Caco-2 (cell line): ENCODE measurements at regions of chr17 and their contacts with region 1.

Region 1: DNA sequence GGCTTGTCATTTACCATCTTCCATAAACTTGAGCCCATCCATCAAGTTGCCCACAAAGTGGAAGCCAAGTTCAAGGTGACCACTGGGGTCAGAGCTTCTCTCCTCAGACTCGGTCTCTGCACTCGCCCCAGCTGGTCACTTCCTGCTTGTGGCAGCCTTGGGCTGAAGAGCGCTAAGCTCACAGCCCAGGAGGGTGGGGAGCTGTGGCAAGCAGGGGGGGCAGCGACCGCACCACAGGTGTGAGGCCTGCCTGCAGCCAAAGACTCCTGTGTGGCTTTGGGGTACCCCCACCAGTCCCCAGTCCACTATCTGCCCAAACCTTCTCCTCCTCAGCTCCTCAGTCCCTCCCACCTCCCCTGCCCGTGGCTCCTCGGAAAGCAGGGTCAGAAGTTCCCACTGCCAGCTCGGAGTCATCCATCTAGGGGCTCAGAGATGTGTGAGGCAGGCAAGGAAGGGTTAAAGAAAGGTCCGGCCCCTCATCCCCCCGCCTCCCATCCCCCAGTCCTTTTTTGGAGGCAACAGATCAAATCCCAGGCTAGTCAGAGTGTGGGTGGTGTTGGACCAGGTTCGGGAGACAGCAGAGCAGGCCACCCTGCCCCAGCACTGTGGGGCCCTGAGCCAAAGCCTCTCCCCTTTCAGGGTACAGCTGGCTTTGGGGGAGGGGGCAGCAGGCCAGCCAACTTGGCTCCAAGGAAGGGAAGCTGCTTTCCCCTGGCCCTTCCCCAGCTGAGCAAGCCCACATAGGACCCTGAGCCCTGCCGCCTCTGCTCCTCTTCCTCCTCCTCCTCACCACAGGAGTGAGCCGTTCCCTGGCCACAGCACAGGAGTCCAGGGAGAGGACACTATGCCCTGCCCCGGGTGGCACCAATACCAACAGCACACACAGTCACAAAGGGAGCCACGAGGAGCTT is 3.2 kb downstream of the CSF3 start:
- DNase-seq: no peak
- H3K4me3 ChIP-seq: no peak overlapping the region
- H3K4me3 Mint-ChIP-seq: no peak overlapping the region
- H3K27ac Mint-ChIP-seq: no peak overlapping the region
- H3K4me1 ChIP-seq: peaks cover 18% of the 10 kb centered on the region
- H3K4me1 Mint-ChIP-seq: no peaks in the 10 kb centered on the region
- H3K27me3 ChIP-seq: no peaks in the 10 kb centered on the region
- H3K27me3 Mint-ChIP-seq: no peaks in the 10 kb centered on the region
- CTCF ChIP-seq: no peak

Region 2: GRCh38 chr17:39777534-39778365 is 240.7 kb before region 1 on chr17:
- CTCF ChIA-PET with region 1: no interaction called
- POLR2A ChIA-PET with region 1: no interaction called
- intact Hi-C with region 1: no loop called
- DNase-seq: no peak
- H3K4me3 ChIP-seq: no peak overlapping the region
- H3K4me3 Mint-ChIP-seq: no peak overlapping the region
- H3K27ac Mint-ChIP-seq: no peak overlapping the region
- H3K4me1 ChIP-seq: peaks cover 18% of the 10 kb centered on the region
- H3K4me1 Mint-ChIP-seq: peaks cover 17% of the 10 kb centered on the region
- H3K27me3 ChIP-seq: no peaks in the 10 kb centered on the region
- H3K27me3 Mint-ChIP-seq: no peaks in the 10 kb centered on the region
- CTCF ChIP-seq: no peak

Region 3: GRCh38 chr17:40075201-40075941 is 56.9 kb after region 1 on chr17:
- CTCF ChIA-PET with region 1: interaction called, 3 read pairs
- POLR2A ChIA-PET with region 1: no interaction called
- intact Hi-C with region 1: loop called (anchors 5 kb)
- DNase-seq: peak; percentile 78 to 81
- H3K4me3 ChIP-seq: no peak overlapping the region
- H3K4me3 Mint-ChIP-seq: no peak overlapping the region
- H3K27ac Mint-ChIP-seq: peak overlapping the region; percentile 47
- H3K4me1 ChIP-seq: peaks cover 49% of the 10 kb centered on the region
- H3K4me1 Mint-ChIP-seq: peaks cover 27% of the 10 kb centered on the region
- H3K27me3 ChIP-seq: no peaks in the 10 kb centered on the region
- H3K27me3 Mint-ChIP-seq: no peaks in the 10 kb centered on the region
- CTCF ChIP-seq: peak; percentile 92 to 94

Region 4: GRCh38 chr17:40139566-40140058 is 121.1 kb after region 1 on chr17:
- CTCF ChIA-PET with region 1: no interaction called
- POLR2A ChIA-PET with region 1: no interaction called
- intact Hi-C with region 1: no loop called
- DNase-seq: no peak
- H3K4me3 ChIP-seq: peak overlapping the region; percentile 53
- H3K4me3 Mint-ChIP-seq: peak overlapping the region; percentile 95
- H3K27ac Mint-ChIP-seq: peak overlapping the region; percentile 97
- H3K4me1 ChIP-seq: peaks cover 8% of the 10 kb centered on the region; the same call in 1 of the 2 replicates
- H3K4me1 Mint-ChIP-seq: peaks cover 9% of the 10 kb centered on the region
- H3K27me3 ChIP-seq: no peaks in the 10 kb centered on the region
- H3K27me3 Mint-ChIP-seq: no peaks in the 10 kb centered on the region
- CTCF ChIP-seq: no peak

Region 5: GRCh38 chr17:40168262-40168832 is 149.9 kb after region 1 on chr17:
- CTCF ChIA-PET with region 1: interaction called, 5 read pairs
- POLR2A ChIA-PET with region 1: no interaction called
- intact Hi-C with region 1: loop called (anchors 1 kb)
- DNase-seq: peak; percentile 68 to 71
- H3K4me3 ChIP-seq: no peak overlapping the region
- H3K4me3 Mint-ChIP-seq: peak overlapping the region; percentile 22
- H3K27ac Mint-ChIP-seq: peak overlapping the region; percentile 87
- H3K4me1 ChIP-seq: peaks cover 7% of the 10 kb centered on the region
- H3K4me1 Mint-ChIP-seq: peaks cover 23% of the 10 kb centered on the region
- H3K27me3 ChIP-seq: no peaks in the 10 kb centered on the region
- H3K27me3 Mint-ChIP-seq: no peaks in the 10 kb centered on the region
- CTCF ChIP-seq: peak; percentile 69 to 89

Region 6: DNA sequence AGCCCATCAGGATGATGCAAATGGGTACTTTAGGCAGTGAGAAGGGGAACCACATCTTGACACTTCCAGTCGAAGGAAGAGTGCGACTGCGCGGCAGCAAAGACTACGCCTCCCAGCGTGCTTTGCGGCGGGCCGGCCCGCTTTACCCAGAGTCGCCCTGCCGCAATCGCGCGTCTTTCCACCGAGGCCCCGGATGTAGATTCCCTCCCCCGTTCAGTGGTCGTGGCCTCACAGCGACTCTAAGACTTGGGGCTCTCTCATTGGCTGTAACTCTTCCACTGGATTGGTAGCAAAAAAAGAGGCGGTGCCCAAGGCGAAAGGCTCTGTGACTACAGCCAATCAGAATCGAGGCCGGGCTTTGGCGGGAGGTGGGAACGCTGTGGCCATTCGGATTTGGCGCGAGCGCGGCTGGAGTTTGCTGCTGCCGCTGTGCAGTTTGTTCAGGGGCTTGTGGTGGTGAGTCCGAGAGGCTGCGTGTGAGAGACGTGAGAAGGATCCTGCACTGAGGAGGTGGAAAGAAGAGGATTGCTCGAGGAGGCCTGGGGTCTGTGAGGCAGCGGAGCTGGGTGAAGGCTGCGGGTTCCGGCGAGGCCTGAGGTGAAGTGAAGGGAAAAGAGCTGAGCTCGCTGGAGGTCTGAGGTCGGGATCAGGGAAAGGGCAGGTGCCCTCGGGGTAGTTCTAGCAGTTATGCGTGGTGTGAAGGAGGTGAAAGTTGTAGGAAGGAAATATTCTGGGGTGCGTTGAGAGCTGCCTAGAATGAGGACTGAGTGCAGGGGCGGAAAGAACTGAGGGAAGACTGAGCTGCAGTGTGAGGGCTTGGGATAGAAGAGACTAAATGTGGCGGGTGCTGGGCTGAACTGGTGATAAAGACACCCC is 269.3 kb after region 1 on chr17 and contains the start of gene CDC6:
- CTCF ChIA-PET with region 1: no interaction called
- POLR2A ChIA-PET with region 1: no interaction called
- intact Hi-C with region 1: loop called (anchors 1 kb)
- DNase-seq: peak; percentile 99 to 100
- H3K4me3 ChIP-seq: peak within 1 kb of the TSS; percentile 90
- H3K4me3 Mint-ChIP-seq: peak within 1 kb of the TSS; percentile 95
- H3K27ac Mint-ChIP-seq: peak within 1 kb of the TSS; percentile 96
- H3K4me1 ChIP-seq: peaks cover 21% of the 10 kb centered on the region
- H3K4me1 Mint-ChIP-seq: peaks cover 7% of the 10 kb centered on the region
- H3K27me3 ChIP-seq: no peaks in the 10 kb centered on the region
- H3K27me3 Mint-ChIP-seq: no peaks in the 10 kb centered on the region
- CTCF ChIP-seq: no peak
- total RNA-seq, gene CDC6: 86.1 and 96.4 TPM in 2 replicates